Caco-2 (cell line): ENCODE measurements at regions of chr1 and their contacts with region 1.

Region 1: DNA sequence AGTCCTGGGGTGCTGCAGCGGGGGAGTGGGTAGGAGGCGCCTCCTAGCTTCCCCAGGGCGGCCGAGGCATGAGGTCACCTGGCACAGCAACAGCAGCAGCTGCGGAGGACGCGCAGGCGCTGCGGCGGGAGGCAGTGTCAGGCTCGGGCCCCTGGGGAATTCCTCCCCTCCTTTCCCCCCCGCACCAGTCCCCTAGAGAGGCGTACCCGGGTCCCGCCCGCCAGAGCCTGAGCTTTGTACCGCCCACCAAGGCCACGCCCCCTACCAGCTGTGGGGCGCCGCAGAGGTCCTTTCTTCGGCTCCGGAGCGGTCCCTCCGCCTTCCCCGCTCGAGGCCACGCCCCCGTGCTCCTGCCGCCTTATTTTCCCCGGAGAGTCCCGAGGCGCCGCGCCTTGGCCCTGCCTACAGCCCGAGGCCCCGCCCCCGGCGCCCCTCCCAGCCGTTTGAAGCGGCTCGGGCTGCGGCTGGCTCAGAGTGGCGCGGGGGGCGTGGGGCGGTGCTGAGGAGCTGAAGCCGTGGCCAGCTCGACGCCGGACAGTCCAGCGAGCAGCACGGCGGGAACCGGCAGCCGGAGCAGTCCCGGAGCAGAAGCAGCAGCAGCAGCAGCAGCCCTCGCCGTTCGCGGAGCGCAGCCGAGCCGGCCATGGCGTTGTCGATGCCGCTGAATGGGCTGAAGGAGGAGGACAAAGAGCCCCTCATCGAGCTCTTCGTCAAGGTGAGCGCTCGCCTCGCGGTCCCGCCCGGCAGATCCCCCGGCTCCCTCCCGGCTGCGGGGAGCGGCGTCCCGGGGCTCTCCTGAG is at the start of gene CLIC4:
- DNase-seq: peak; percentile 99
- H3K4me3 ChIP-seq: peak within 1 kb of the TSS; percentile 66
- H3K4me3 Mint-ChIP-seq: peak within 1 kb of the TSS; percentile 84
- H3K27ac Mint-ChIP-seq: peak within 1 kb of the TSS; percentile 83
- H3K4me1 ChIP-seq: peaks cover 21% of the 10 kb centered on the region
- H3K4me1 Mint-ChIP-seq: peaks cover 23% of the 10 kb centered on the region
- H3K27me3 ChIP-seq: no peaks in the 10 kb centered on the region
- H3K27me3 Mint-ChIP-seq: no peaks in the 10 kb centered on the region
- CTCF ChIP-seq: peak in 1 of 2 experiments; percentile 21
- total RNA-seq, gene CLIC4: 125 and 140 TPM in 2 replicates

Region 2: GRCh38 chr1:24438423-24438901 is 306.6 kb before region 1 on chr1:
- CTCF ChIA-PET with region 1: no interaction called
- POLR2A ChIA-PET with region 1: no interaction called
- intact Hi-C with region 1: no loop called
- DNase-seq: no peak
- H3K4me3 ChIP-seq: no peak overlapping the region
- H3K4me3 Mint-ChIP-seq: no peak overlapping the region
- H3K27ac Mint-ChIP-seq: no peak overlapping the region
- H3K4me1 ChIP-seq: no peaks in the 10 kb centered on the region
- H3K4me1 Mint-ChIP-seq: no peaks in the 10 kb centered on the region
- H3K27me3 ChIP-seq: no peaks in the 10 kb centered on the region
- H3K27me3 Mint-ChIP-seq: no peaks in the 10 kb centered on the region
- CTCF ChIP-seq: no peak

Region 3: GRCh38 chr1:24688621-24689195 is 56.4 kb before region 1 on chr1:
- CTCF ChIA-PET with region 1: interaction called, 13 read pairs
- POLR2A ChIA-PET with region 1: interaction called, 6 read pairs
- intact Hi-C with region 1: loop called (anchors 1 kb)
- DNase-seq: peak; percentile 72 to 75
- H3K4me3 ChIP-seq: no peak overlapping the region
- H3K4me3 Mint-ChIP-seq: no peak overlapping the region
- H3K27ac Mint-ChIP-seq: no peak overlapping the region
- H3K4me1 ChIP-seq: peaks cover 8% of the 10 kb centered on the region
- H3K4me1 Mint-ChIP-seq: peaks cover 3% of the 10 kb centered on the region
- H3K27me3 ChIP-seq: no peaks in the 10 kb centered on the region
- H3K27me3 Mint-ChIP-seq: no peaks in the 10 kb centered on the region
- CTCF ChIP-seq: peak; percentile 64 to 86

Region 4: GRCh38 chr1:24705260-24706073 is 39.6 kb before region 1 on chr1:
- CTCF ChIA-PET with region 1: interaction called, 7 read pairs
- POLR2A ChIA-PET with region 1: interaction called, 10 read pairs
- intact Hi-C with region 1: loop called (anchors 5 kb)
- DNase-seq: peak; percentile 88 to 89
- H3K4me3 ChIP-seq: peak overlapping the region; percentile 21
- H3K4me3 Mint-ChIP-seq: peak overlapping the region; percentile 85
- H3K27ac Mint-ChIP-seq: peak overlapping the region; percentile 74
- H3K4me1 ChIP-seq: 0 out of 2 replicates have a peak, but pooled peaks cover 7% of the 10 kb centered on the region
- H3K4me1 Mint-ChIP-seq: peaks cover 16% of the 10 kb centered on the region
- H3K27me3 ChIP-seq: no peaks in the 10 kb centered on the region
- H3K27me3 Mint-ChIP-seq: no peaks in the 10 kb centered on the region
- CTCF ChIP-seq: no peak

Region 5: GRCh38 chr1:24724345-24725208 is 20.5 kb before region 1 on chr1:
- CTCF ChIA-PET with region 1: interaction called, 14 read pairs
- POLR2A ChIA-PET with region 1: interaction called, 12 read pairs
- intact Hi-C with region 1: no loop called
- DNase-seq: peak; percentile 69 to 81
- H3K4me3 ChIP-seq: 0 out of 2 replicates have a peak overlapping the region, but pooled peaks have one; percentile 16
- H3K4me3 Mint-ChIP-seq: peak overlapping the region; percentile 68
- H3K27ac Mint-ChIP-seq: peak overlapping the region; percentile 85
- H3K4me1 ChIP-seq: peaks cover 16% of the 10 kb centered on the region
- H3K4me1 Mint-ChIP-seq: peaks cover 17% of the 10 kb centered on the region
- H3K27me3 ChIP-seq: no peaks in the 10 kb centered on the region
- H3K27me3 Mint-ChIP-seq: no peaks in the 10 kb centered on the region
- CTCF ChIP-seq: no peak

Region 6: DNA sequence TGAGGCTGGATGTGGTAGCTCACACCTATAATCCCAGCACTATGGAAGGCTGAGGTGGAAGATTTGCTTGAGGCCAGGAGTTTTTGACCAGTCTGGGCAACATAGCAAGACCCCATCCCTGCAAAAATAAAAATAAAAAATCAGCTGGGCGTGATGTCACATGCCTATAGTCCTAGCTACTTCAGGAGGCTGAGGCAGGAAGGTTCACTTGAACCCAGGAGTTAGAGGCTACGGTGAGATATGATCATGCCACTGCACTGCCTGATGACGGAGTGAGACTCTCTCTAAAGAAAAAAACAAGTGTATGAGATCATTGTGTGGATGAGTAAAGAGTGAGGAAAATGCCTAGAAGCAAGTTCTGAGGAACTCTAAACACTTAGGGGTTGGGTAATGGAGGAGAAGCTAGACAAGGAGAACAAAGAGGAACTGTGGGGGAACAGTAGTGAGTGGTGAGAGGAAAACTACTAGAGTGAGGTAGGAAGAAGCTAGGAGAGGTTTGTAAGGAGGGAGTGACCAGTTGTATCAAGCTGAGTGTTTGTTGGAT is 17.1 kb after region 1 on chr1:
- CTCF ChIA-PET with region 1: no interaction called
- POLR2A ChIA-PET with region 1: no interaction called
- intact Hi-C with region 1: no loop called
- DNase-seq: no peak
- H3K4me3 ChIP-seq: no peak overlapping the region
- H3K4me3 Mint-ChIP-seq: no peak overlapping the region
- H3K27ac Mint-ChIP-seq: no peak overlapping the region
- H3K4me1 ChIP-seq: no peaks in the 10 kb centered on the region; the same call in 1 of the 2 replicates
- H3K4me1 Mint-ChIP-seq: no peaks in the 10 kb centered on the region
- H3K27me3 ChIP-seq: no peaks in the 10 kb centered on the region
- H3K27me3 Mint-ChIP-seq: no peaks in the 10 kb centered on the region
- CTCF ChIP-seq: no peak

Region 7: GRCh38 chr1:24830680-24831272 is 85.7 kb after region 1 on chr1:
- CTCF ChIA-PET with region 1: interaction called, 18 read pairs
- POLR2A ChIA-PET with region 1: interaction called, 3 read pairs
- intact Hi-C with region 1: loop called (anchors 5 kb)
- DNase-seq: peak in 1 of 2 experiments; percentile 32
- H3K4me3 ChIP-seq: no peak overlapping the region
- H3K4me3 Mint-ChIP-seq: no peak overlapping the region
- H3K27ac Mint-ChIP-seq: no peak overlapping the region
- H3K4me1 ChIP-seq: no peaks in the 10 kb centered on the region
- H3K4me1 Mint-ChIP-seq: no peaks in the 10 kb centered on the region
- H3K27me3 ChIP-seq: no peaks in the 10 kb centered on the region
- H3K27me3 Mint-ChIP-seq: no peaks in the 10 kb centered on the region
- CTCF ChIP-seq: peak; percentile 51 to 60